ENCODE measurements at regions of chr1 and their contacts with region 1.

Region 1: GRCh38 chr1:16960560-16961296 is 19.7 kb downstream of the MFAP2 start:
- DNase-seq: no peak
- H3K4me3 ChIP-seq: peak overlapping the region; percentile 25
- H3K27me3 ChIP-seq: no peaks in the 10 kb centered on the region
- CTCF ChIP-seq: peak; percentile 85

Region 2: GRCh38 chr1:16491056-16491962 is 469.4 kb before region 1 on chr1:
- CTCF ChIA-PET with region 1: no interaction called
- POLR2A ChIA-PET with region 1: no interaction called
- DNase-seq: no peak
- H3K4me3 ChIP-seq: no peak overlapping the region
- H3K27me3 ChIP-seq: no peaks in the 10 kb centered on the region
- CTCF ChIP-seq: no peak

Region 3: DNA sequence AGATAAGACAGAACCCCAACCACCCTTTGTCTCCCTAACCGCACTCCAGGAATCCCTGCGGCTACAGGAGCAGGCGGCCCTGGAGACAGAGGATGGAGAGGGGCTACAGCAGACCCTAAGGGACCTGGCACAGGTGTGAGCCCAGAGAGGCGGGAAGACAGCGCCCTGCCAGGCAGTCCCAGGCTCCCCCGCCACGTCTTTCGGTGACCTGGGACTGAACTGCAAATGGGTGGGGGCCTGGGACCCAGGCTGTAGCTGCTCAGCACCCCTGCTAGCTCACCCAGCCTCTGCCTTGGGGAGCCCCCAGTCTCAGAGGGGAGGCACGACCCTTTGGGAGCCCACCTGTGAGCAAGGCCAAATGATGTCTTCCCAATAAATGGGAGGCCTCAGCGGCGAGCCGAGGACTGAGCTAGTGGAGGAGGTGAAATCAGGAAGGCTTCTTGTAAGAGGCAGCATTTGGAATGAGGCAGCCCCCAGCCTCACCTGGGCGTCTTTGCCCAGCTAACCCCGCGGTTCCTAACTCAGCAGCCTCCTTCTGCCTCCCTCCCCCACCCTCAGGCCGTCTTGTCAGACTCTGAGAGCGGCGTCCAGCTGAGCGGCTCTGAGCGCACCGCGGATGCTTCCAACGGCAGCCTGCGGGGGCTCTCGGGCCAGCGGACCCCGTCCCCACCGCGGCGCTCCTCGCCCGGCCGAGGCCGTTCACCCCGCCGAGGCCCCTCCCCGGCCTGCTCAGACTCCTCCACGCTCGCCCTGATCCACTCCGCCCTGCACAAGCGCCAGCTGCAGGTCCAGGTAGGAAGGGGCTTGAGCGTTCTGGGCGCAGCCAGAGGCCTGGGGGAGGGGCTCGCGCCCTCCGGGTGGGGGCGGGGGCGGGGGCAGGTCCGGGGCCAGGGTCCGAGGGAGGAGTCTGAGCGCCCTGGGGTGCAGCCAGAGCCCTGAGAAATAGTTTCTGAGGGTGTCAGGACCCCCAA is 22.1 kb before region 1 on chr1:
- CTCF ChIA-PET with region 1: no interaction called
- POLR2A ChIA-PET with region 1: no interaction called
- DNase-seq: no peak
- H3K4me3 ChIP-seq: no peak overlapping the region
- H3K27me3 ChIP-seq: no peaks in the 10 kb centered on the region
- CTCF ChIP-seq: no peak

Region 4: GRCh38 chr1:17009706-17010105 is 49.0 kb after region 1 on chr1:
- CTCF ChIA-PET with region 1: interaction called, 10 read pairs
- POLR2A ChIA-PET with region 1: no interaction called
- DNase-seq: no peak
- H3K4me3 ChIP-seq: no peak overlapping the region
- H3K27me3 ChIP-seq: no peaks in the 10 kb centered on the region
- CTCF ChIP-seq: no peak

Region 5: GRCh38 chr1:17021896-17022295 is 61.2 kb after region 1 on chr1:
- CTCF ChIA-PET with region 1: interaction called, 12 read pairs
- POLR2A ChIA-PET with region 1: no interaction called
- DNase-seq: no peak
- H3K4me3 ChIP-seq: no peak overlapping the region
- H3K27me3 ChIP-seq: no peaks in the 10 kb centered on the region
- CTCF ChIP-seq: no peak

Measured in BJ (cell line).